Activated CD8-positive, alpha-beta T cell treated with anti-CD3 and anti-CD28 coated beads, Interleukin-2, amount 10 ng/mL, durations not matched to agents 7 days and 5 days (primary cell): ENCODE measurements at regions of chr2 and their contacts with region 1.

Region 1: DNA sequence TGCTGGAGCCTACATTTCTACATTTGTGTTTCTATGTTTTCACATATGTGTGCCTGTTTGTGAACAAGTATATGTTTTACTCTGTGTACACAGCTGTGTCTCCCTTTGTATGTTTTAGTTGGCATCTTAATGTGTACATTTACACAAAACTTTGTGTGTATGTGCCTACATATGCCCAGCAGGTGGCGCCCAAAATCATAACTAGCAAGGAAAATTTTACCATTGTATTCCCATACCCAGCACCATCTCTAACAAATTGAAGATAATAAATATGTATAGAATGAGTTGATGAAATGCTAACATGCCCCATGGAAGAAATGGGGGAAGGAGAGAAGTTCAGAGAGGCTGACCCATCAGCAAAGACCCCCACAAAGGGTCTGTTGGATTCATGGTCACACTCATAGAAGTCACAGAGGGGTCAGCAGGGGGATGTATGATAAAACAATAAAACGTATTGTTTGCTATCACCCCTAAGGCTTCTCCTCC is 48.1 kb downstream of the PKDCC start:
- DNase-seq: peak; percentile 85
- ATAC-seq: peak; percentile 52
- H3K4me3 Mint-ChIP-seq: no peak overlapping the region
- H3K27ac Mint-ChIP-seq: no peak overlapping the region
- H3K4me1 Mint-ChIP-seq: peaks cover 42% of the 10 kb centered on the region
- H3K27me3 Mint-ChIP-seq: peaks cover 14% of the 10 kb centered on the region

Region 2: DNA sequence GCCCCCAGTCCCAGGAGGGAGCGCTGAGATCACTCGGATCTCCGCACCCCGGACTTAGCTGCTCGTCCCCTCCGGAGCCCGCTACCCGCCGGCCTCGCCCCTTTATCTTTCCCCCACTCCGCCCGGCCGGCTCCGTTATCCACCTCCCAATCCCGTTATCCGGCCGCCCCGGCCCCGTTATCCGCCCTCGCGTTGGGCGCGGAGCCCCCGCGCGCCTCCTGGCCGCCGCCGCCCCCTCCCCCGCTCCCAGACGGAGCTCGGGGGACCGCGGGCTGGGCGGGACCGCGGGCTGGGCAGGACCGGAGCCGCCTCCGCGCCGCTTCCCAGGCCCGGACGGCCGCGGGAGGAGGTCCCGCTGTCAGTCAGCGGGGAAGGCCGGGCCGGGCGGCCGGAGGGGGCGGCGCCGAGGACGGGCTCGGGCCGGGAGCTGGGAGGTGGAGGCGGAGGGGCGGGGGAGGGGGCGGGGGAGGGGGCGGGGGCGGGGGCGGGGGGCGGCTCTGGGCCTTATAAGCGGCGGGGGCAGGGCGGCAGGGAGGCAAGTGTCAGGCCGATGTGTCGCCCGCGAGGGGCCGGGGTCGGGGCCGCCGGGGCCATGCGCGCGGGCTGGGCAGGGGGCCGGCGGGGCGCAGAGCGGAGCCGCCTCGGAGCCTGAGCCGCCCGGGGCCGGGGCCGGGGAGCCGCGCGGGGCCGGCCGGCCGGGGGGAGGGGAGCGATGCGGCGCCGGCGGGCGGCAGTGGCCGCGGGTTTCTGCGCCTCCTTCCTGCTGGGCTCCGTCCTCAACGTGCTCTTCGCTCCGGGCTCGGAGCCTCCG is 48.3 kb before region 1 on chr2 and contains the start of gene PKDCC:
- CTCF ChIA-PET with region 1: no interaction called
- POLR2A ChIA-PET with region 1: no interaction called
- DNase-seq: no peak
- ATAC-seq: peak; percentile 63
- H3K4me3 Mint-ChIP-seq: peak within 1 kb of the TSS; percentile 40
- H3K27ac Mint-ChIP-seq: no peak within 1 kb of the TSS
- H3K4me1 Mint-ChIP-seq: peaks cover 2% of the 10 kb centered on the region
- H3K27me3 Mint-ChIP-seq: peaks cover 58% of the 10 kb centered on the region
- total RNA-seq, gene PKDCC: not detected

Region 3: DNA sequence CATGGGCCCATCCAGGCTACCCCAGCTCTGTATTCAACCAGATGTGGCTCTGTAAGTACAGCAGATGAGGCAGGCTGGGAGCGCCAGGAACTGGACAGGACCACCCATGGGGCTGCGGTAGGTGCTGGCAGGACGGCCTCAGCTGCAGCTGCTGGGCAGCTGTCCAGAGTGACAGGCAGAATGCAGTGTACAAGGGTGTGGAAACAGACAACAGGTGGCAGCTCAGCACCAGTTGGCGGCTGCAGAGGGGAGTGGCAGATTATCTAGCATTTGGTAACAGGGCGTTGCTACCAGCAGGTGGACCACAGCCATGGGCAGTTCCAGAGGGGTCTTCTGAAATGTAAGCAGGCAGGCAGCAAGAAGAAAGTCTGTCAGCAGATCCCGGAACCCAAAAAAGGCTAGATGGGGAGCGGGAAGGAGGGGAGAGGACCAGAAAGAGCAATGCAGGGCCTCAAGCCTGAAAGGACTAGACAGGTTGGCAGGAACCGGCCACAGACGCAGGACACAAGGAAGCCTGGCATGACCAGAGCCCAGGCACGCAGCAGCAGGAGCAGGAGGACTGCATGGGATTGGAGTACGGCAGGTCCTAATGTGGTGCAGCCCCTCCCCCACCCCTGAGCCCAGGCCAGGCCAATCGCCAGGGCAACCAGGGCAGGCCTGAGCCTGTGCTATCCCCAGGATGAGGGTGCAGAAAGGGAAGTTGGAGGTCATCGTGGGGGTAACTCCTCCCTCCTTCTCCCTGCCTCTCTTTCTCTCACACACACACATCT is 23.4 kb before region 1 on chr2:
- CTCF ChIA-PET with region 1: no interaction called
- POLR2A ChIA-PET with region 1: no interaction called
- DNase-seq: no peak
- ATAC-seq: no peak
- H3K4me3 Mint-ChIP-seq: no peak overlapping the region
- H3K27ac Mint-ChIP-seq: no peak overlapping the region
- H3K4me1 Mint-ChIP-seq: no peaks in the 10 kb centered on the region
- H3K27me3 Mint-ChIP-seq: peaks cover 8% of the 10 kb centered on the region

Region 4: GRCh38 chr2:42127425-42128424 is 31.8 kb after region 1 on chr2:
- CTCF ChIA-PET with region 1: interaction called, 24 read pairs
- POLR2A ChIA-PET with region 1: interaction called, 18 read pairs
- DNase-seq: peak; percentile 49
- ATAC-seq: peak; percentile 25
- H3K4me3 Mint-ChIP-seq: peak overlapping the region; percentile 48
- H3K27ac Mint-ChIP-seq: peak overlapping the region; percentile 90
- H3K4me1 Mint-ChIP-seq: peaks cover 91% of the 10 kb centered on the region
- H3K27me3 Mint-ChIP-seq: no peaks in the 10 kb centered on the region

Region 5: DNA sequence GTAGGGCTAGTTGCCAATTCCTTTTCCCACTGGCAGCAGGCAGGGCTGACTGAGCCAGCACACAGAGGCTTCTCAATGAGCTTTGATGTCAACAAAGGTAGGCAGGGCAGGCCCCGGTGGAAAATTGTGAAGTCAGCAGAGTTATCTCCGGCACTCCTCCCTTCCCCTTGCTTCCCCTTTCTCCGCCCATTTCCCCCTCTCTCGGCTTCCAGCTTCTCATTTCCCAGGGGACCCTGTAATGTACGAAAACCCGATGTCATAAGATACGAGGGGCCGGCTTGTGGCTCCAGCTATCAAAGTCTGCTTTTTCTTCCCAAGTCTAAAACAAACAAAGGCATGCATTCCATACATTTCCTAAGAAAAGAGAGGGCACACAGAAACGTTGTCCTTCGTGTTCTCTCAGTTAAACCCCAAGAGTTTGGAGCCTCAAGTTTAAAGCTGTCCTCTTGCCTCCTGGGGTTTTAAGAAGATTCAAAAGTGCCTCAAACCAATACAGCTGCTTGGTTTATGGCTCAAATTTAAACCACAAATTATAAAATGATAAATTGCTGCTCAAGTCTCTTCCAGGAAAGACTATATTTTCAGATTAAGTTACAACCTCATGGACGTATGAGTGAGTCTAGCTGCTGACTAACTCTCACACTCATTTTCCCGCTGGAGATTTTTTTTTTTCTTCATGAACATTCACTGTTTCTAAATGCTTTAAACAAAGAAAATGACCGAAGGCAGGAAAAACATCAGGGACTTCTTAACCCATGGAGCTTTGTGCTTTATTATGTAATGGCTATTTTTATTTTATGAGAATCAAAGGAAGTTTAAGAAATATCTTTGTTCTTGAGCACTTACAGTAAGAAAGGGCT is 46.0 kb after region 1 on chr2:
- CTCF ChIA-PET with region 1: interaction called, 22 read pairs
- POLR2A ChIA-PET with region 1: no interaction called
- DNase-seq: no peak
- ATAC-seq: peak; percentile 82
- H3K4me3 Mint-ChIP-seq: peak overlapping the region; percentile 22
- H3K27ac Mint-ChIP-seq: peak overlapping the region; percentile 16
- H3K4me1 Mint-ChIP-seq: peaks cover 51% of the 10 kb centered on the region
- H3K27me3 Mint-ChIP-seq: no peaks in the 10 kb centered on the region

Region 6: DNA sequence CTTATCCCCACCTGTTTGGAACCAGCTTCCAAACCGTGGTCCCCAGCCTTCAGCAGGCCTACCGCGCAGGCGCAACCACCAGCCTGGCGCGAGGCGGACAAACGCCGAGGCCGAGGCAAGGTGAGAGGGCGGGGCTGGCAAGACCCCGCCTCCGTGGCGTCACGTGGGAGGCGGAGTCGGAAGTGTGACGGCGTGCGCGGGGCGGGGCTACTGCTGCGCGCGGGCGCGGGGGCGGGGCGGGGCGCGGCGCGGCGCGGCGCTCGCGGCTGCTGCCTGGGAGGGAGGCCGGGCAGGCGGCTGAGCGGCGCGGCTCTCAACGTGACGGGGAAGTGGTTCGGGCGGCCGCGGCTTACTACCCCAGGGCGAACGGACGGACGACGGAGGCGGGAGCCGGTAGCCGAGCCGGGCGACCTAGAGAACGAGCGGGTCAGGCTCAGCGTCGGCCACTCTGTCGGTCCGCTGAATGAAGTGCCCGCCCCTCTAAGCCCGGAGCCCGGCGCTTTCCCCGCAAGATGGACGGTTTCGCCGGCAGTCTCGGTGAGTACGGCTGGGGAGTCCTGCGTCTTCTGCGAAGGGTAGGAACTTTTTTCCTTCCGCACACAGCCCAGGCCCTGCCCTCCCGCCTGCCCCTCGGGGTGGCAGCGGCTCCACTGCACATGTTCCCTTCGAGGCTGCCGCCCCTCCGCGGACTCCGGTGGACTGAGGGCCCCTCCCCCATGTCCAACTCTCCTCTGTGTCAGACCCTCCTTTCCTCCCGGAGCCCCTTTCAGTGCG is 73.3 kb after region 1 on chr2 and contains the start of gene EML4:
- CTCF ChIA-PET with region 1: interaction called, 48 read pairs
- POLR2A ChIA-PET with region 1: interaction called, 5 read pairs
- DNase-seq: peak; percentile 91
- ATAC-seq: peak; percentile 88
- H3K4me3 Mint-ChIP-seq: no peak within 1 kb of the TSS
- H3K27ac Mint-ChIP-seq: no peak within 1 kb of the TSS
- H3K4me1 Mint-ChIP-seq: peaks cover 23% of the 10 kb centered on the region
- H3K27me3 Mint-ChIP-seq: peaks cover 2% of the 10 kb centered on the region
- total RNA-seq, gene EML4: 88.0 to 89.7 TPM

Region 7: DNA sequence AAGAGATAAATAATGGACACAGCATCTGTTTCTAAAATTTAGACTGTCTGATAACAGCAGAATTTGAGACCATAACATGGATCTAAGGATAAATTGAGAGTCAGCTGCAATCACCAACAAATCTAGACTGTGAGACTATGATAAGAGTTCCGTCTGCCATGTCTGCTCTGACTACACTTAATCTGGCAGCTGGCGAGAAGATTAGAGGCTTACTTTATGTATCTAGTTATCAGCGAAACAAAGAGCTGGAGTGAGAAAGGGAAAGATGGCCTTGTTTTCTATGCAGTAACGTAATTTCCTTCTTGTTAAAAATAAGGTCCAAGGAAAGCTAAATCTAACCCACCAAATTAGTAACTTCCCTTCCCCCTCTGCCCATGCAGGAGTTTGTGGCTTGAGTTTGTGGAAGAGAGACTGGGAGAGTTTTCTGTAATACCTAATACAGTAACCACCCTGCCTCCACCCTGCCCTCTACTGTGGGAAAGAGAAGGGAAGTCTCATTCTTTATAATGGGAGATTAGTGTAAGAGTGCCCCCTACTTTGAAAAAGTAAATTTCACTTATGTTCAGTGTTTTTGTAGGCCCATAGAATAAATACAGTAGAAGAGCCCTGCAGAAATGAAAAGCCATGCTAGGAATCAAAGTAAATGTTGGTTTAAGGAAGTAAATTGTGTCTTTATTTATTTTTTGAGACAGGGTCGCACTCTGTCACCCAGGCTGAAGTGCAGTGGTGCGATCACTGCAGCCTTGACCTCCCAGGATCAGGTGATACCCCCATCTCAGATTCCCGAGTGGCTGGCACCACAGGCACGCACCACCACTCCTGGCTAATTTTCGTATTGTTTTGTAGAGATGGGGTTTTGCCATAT is 100.7 kb after region 1 on chr2:
- CTCF ChIA-PET with region 1: interaction called, 70 read pairs
- POLR2A ChIA-PET with region 1: no interaction called
- DNase-seq: peak; percentile 60
- ATAC-seq: peak; percentile 86
- H3K4me3 Mint-ChIP-seq: no peak overlapping the region
- H3K27ac Mint-ChIP-seq: peak overlapping the region; percentile 35
- H3K4me1 Mint-ChIP-seq: peaks cover 52% of the 10 kb centered on the region
- H3K27me3 Mint-ChIP-seq: no peaks in the 10 kb centered on the region

Region 8: GRCh38 chr2:42298996-42299754 is 203.2 kb after region 1 on chr2:
- CTCF ChIA-PET with region 1: no interaction called
- POLR2A ChIA-PET with region 1: no interaction called
- DNase-seq: no peak
- ATAC-seq: peak; percentile 50
- H3K4me3 Mint-ChIP-seq: no peak overlapping the region
- H3K27ac Mint-ChIP-seq: peak overlapping the region; percentile 65
- H3K4me1 Mint-ChIP-seq: peaks cover 46% of the 10 kb centered on the region
- H3K27me3 Mint-ChIP-seq: no peaks in the 10 kb centered on the region

Region 9: GRCh38 chr2:42328148-42328833 is 232.3 kb after region 1 on chr2:
- CTCF ChIA-PET with region 1: interaction called, 61 read pairs
- POLR2A ChIA-PET with region 1: no interaction called
- DNase-seq: no peak
- ATAC-seq: peak; percentile 55
- H3K4me3 Mint-ChIP-seq: no peak overlapping the region
- H3K27ac Mint-ChIP-seq: no peak overlapping the region
- H3K4me1 Mint-ChIP-seq: no peaks in the 10 kb centered on the region
- H3K27me3 Mint-ChIP-seq: no peaks in the 10 kb centered on the region